ENCODE measurements at regions of chr9 and their contacts with region 1.

Region 1: DNA sequence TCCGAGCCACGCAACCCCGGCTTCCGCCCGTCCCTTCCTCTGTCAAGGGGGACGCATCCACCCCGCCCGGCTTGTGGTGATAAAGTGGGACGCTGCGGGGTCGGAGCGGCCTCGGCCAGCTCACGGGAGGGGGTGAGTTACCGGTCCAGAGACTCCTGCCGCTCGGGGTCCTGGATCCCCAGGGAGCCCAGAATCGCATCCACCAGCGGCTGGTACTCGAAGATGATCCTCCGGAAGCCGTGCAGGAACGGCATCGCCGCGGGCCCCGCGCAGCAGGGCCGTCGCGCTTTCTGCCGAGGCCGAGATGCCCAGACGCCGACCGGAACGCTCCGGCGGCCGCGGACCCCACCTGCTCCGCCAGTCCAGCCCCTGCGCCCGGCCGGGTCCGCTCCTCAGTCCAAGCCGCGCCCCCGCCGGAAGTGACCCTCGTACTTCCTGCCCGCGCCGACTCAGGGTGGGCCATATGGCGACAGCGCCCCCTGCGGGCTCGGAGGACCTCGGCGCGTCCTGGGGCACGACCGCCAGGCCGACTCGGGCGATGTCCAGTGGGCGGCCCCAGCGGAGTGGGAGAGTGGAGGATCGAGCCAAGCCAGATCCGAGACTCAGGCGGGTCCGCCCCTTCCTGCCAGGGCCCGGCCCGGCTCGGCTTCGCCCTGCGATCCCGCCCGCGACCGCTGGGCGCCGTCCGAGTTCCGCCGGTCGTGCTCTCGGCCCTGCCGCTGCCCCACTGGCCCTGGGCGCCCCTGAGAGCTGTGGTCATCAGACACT is at the start of gene ASB6:
- DNase-seq: peak; percentile 96
- ATAC-seq: peak; percentile 94
- H3K4me3 ChIP-seq: peak within 1 kb of the TSS; percentile 81
- H3K27ac ChIP-seq: peak within 1 kb of the TSS; percentile 92
- H3K4me1 ChIP-seq: peaks cover 15% of the 10 kb centered on the region
- H3K27me3 ChIP-seq: no peaks in the 10 kb centered on the region
- CTCF ChIP-seq: peak; percentile 98
- POLR2A ChIP-seq: peak; percentile 85
- RAD21 ChIP-seq: peak; percentile 96
- total RNA-seq, gene ASB6: 9.4 and 9.7 TPM in 2 replicates

Region 2: DNA sequence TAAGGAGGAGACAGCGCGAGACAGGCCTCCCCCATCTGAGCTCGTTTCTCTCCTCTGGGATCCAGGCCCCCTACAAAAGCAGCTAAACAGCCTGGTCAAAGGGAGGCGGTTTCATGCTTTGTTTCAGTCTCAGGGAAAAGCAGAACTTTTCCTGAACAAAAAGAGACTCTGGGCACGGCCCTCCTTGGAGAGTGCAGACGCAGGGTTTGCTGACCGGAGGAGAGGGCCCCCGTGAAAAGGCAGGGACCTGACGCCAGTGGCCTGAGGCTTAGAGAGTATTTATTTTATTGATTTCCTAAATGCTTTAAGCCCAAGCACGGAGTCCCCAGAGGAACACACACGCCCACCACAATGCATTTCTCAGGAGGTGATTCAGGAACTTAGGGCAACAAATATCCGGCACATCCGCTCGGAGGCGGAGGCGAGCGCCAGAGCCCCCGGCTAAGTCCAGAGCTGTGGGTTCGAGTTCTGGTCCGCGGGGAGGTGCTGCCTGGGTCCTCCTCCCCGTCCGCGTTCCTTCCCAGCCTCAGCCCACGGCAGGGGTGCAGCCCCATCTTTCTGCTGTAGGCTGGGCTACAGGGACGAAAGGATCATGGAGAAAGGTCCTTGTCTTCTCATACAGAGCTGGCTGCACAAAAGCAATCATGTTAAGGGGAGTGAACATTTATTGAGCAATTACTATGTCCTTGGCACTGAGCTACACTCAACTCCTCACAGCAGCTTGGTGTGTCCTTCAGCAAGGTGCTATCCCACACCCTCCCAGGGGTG is 70.9 kb after region 1 on chr9:
- CTCF ChIA-PET with region 1: no interaction called
- POLR2A ChIA-PET with region 1: no interaction called
- dilution Hi-C with region 1: no loop called
- in situ Hi-C with region 1: no loop called
- intact Hi-C with region 1: loop called (anchors 1 kb)
- DNase-seq: peak; percentile 87
- ATAC-seq: peak; percentile 61
- H3K4me3 ChIP-seq: peak overlapping the region; percentile 3; the same call in 1 of the 2 replicates
- H3K27ac ChIP-seq: peak overlapping the region; percentile 81
- H3K4me1 ChIP-seq: peaks cover 52% of the 10 kb centered on the region
- H3K27me3 ChIP-seq: no peaks in the 10 kb centered on the region
- CTCF ChIP-seq: peak; percentile 21; the same call in 1 of the 2 replicates
- POLR2A ChIP-seq: no peak
- RAD21 ChIP-seq: no peak

Region 3: DNA sequence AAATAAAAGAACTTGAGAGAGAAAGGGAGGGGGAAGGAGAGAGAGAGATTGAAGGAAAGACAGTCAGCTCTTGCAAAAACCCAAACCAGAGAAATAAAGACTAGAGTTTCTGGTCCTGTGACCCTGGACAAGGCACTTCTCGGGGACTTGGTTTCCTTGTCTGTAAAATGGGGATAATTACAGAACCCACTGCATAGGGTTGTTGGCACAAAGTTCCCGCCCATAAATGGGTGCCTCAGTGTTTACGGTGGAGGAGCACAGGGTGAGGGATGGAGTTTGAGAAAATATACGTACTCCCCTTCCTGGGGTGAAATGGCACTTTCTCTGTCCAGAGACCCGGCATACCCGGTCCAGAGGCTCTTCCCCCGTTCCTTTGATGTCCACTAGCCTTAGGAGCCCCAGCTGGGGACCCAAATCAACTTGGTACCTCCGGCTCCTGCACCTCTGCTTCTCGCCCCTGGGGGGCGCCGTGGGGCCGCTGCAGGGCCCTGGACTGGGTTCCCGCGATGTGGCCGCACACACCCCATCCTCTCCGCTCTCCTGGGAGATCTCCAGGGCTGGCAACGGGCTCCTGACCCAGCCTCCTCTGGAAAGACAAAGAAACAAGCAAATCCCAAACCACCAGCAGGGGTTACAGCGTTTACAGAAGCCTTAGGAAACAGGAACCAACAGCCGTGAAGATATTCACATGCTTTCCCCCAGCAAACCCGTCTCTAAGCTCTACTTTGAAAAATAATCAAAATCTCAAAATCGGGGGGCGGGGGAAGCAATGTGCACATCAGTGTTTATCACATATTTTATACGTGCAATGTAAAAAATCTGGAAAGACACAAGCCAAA is 84.6 kb after region 1 on chr9:
- CTCF ChIA-PET with region 1: interaction called, 7 read pairs
- POLR2A ChIA-PET with region 1: no interaction called
- dilution Hi-C with region 1: no loop called
- in situ Hi-C with region 1: no loop called
- intact Hi-C with region 1: loop called (anchors 1 kb)
- DNase-seq: peak; percentile 78
- ATAC-seq: peak; percentile 96
- H3K4me3 ChIP-seq: no peak overlapping the region
- H3K27ac ChIP-seq: peak overlapping the region; percentile 42; the same call in 1 of the 2 replicates
- H3K4me1 ChIP-seq: peaks cover 8% of the 10 kb centered on the region; the same call in 1 of the 2 replicates
- H3K27me3 ChIP-seq: no peaks in the 10 kb centered on the region
- CTCF ChIP-seq: peak; percentile 88
- POLR2A ChIP-seq: no peak
- RAD21 ChIP-seq: peak; percentile 77

Region 4: DNA sequence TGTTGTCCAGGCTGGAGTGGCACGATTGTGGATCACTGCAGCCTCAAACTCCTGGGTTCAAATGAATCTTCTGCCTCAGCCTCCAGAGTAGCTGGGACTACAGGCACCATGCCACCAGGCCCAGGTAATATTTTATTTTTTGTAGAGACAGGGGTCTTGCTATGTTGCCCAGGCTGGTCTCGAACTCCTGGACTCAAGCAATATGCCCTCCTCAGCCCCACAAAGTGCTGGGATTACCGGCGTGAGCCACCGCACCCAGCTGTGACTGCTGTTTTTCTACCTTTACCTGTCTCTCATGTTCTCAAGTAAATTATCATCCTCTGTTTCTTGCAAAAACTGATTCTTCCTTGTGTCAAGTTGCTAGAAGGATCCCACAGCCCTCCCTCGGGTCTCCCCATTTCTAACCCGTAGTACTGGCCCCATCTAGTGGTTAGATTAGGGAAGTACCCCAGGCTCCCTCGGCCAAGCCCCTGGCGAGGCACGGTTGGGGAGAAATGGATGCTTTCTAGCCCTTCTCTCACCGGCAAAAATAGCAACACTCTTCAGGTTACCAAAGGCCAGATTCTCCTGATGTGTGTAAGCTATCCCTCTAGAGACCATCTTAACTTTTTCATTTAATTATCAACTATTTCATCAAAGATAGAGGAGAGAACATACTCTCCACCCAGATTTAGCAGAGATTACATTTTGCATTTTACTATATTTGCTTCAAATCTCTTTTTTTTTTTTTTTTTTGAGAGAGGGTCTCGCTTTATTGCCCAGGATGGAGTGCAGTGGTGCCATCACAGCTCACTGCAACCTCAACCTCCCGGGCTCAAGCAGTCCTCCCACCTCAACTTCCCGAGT is 141.8 kb after region 1 on chr9:
- CTCF ChIA-PET with region 1: interaction called, 3 read pairs
- POLR2A ChIA-PET with region 1: no interaction called
- dilution Hi-C with region 1: no loop called
- in situ Hi-C with region 1: no loop called
- intact Hi-C with region 1: loop called (anchors 1 kb)
- DNase-seq: peak; percentile 75
- ATAC-seq: peak; percentile 96
- H3K4me3 ChIP-seq: no peak overlapping the region
- H3K27ac ChIP-seq: no peak overlapping the region
- H3K4me1 ChIP-seq: peaks cover 3% of the 10 kb centered on the region; the same call in 1 of the 2 replicates
- H3K27me3 ChIP-seq: peaks cover 10% of the 10 kb centered on the region
- CTCF ChIP-seq: peak; percentile 96
- POLR2A ChIP-seq: peak; percentile 66
- RAD21 ChIP-seq: peak; percentile 100